Activated T-helper 2 cell treated with anti-CD3 and anti-CD28 coated beads, Interferon-gamma antibody, Interleukin-2, Interleukin-4, amounts not matched to agents 10 μg/mL and 5 μg/mL and 100 μg/mL, durations not matched to agents 14 hours and 24 hours and 36 hours (primary cell): ENCODE measurements at regions of chr4 and their contacts with region 1.

Region 1: DNA sequence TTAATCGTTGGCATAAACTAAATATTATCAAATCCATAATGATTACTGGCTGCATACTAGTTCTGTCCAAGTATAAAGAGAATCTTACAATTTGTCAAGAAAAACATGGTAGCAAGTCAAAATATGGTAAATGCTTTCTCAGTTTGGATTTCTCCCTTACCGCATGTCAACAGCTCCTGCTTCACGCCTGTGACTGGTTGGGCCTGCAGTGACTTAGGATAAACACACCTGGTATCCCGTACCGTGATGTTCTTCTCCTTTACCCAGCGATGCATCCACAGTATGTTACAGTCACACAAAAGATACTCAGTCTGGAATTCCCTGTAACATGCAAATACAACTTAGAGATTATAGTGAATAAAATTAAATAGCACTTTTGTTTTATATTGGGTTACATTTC is 71.1 kb downstream of the ADGRA3 start:
- DNase-seq: no peak
- H3K4me3 Mint-ChIP-seq: peak overlapping the region; percentile 79
- H3K27ac Mint-ChIP-seq: peak overlapping the region; percentile 94
- H3K4me1 Mint-ChIP-seq: peaks cover 48% of the 10 kb centered on the region
- H3K27me3 Mint-ChIP-seq: no peaks in the 10 kb centered on the region

Region 2: GRCh38 chr4:22458098-22458497 is 13.3 kb after region 1 on chr4:
- intact Hi-C with region 1: loop called (anchors 1 kb)
- DNase-seq: no peak
- H3K4me3 Mint-ChIP-seq: no peak overlapping the region
- H3K27ac Mint-ChIP-seq: no peak overlapping the region
- H3K4me1 Mint-ChIP-seq: peaks cover 32% of the 10 kb centered on the region
- H3K27me3 Mint-ChIP-seq: no peaks in the 10 kb centered on the region

Region 3: GRCh38 chr4:22483551-22483981 is 38.8 kb after region 1 on chr4:
- intact Hi-C with region 1: loop called (anchors 5 kb)
- DNase-seq: no peak
- H3K4me3 Mint-ChIP-seq: no peak overlapping the region
- H3K27ac Mint-ChIP-seq: no peak overlapping the region
- H3K4me1 Mint-ChIP-seq: peaks cover 34% of the 10 kb centered on the region
- H3K27me3 Mint-ChIP-seq: no peaks in the 10 kb centered on the region

Region 4: DNA sequence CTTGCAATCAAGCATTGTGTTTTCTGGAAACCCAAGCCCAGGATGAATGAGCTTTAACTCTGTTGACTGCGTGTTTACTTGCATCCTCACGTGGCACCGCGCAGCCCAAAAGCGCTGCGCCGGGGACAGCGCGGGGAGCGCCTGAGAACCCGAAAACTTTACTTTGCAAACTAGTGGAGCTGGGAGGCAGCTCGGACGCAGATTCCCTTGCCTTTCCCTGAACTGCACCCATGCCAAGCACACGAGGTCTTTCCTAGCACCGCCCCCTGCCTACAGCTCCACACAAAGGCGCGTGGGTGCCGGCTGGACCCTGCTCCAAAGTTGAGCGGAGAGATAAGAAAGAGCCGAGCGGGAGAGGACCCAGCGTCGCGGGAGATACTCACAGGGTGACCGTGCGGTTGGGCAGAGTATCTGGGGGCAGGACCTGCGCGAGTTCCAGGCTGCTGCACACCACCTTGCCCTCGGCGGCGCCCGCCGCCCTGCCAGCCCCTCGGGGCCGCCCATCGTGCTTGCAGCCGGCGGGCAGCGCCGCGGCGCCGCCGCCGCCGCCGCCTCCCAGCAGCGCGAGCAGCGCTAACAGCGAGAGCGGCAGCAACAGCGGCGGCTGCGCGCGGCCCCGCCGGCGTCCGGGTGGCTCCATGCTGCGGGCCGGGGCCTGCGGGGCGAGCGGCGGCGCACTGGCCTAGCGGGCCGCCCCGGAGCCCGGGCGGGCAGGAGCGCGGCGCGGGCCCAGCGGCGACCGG is 70.5 kb after region 1 on chr4:
- intact Hi-C with region 1: loop called (anchors 2 kb)
- DNase-seq: peak; percentile 46
- H3K4me3 Mint-ChIP-seq: peak overlapping the region; percentile 100
- H3K27ac Mint-ChIP-seq: peak overlapping the region; percentile 98
- H3K4me1 Mint-ChIP-seq: peaks cover 25% of the 10 kb centered on the region
- H3K27me3 Mint-ChIP-seq: no peaks in the 10 kb centered on the region

Region 5: GRCh38 chr4:22730021-22730420 is 285.2 kb after region 1 on chr4:
- intact Hi-C with region 1: no loop called
- DNase-seq: no peak
- H3K4me3 Mint-ChIP-seq: no peak overlapping the region
- H3K27ac Mint-ChIP-seq: no peak overlapping the region
- H3K4me1 Mint-ChIP-seq: peaks cover 17% of the 10 kb centered on the region
- H3K27me3 Mint-ChIP-seq: peaks cover 6% of the 10 kb centered on the region